Ovary (tissue), 10 donors: ENCODE measurements at regions of chr3 and their contacts with region 1.

Region 1: GRCh38 chr3:98022978-98023820 is 11.9 kb downstream of the GABRR3 start:
- DNase-seq: peak; percentile 79 to 92 (median 91)
- H3K4me3 ChIP-seq: no peak overlapping the region
- H3K27ac ChIP-seq: no peak overlapping the region
- H3K4me1 ChIP-seq: no peaks in the 10 kb centered on the region
- H3K27me3 ChIP-seq: no peaks in the 10 kb centered on the region
- CTCF ChIP-seq: peak; percentile 83 to 87 (median 86)
- EP300 ChIP-seq: no peak
- POLR2A ChIP-seq: no peak

Region 2: GRCh38 chr3:97793420-97794019 is 229.7 kb before region 1 on chr3:
- intact Hi-C with region 1: loop called (anchors 2 to 5 kb)
- DNase-seq: no peak
- H3K4me3 ChIP-seq: no peak overlapping the region
- H3K27ac ChIP-seq: no peak overlapping the region
- H3K4me1 ChIP-seq: no peaks in the 10 kb centered on the region
- H3K27me3 ChIP-seq: no peaks in the 10 kb centered on the region
- CTCF ChIP-seq: peak; percentile 51 to 76 (median 74)
- EP300 ChIP-seq: no peak
- POLR2A ChIP-seq: no peak

Region 3: DNA sequence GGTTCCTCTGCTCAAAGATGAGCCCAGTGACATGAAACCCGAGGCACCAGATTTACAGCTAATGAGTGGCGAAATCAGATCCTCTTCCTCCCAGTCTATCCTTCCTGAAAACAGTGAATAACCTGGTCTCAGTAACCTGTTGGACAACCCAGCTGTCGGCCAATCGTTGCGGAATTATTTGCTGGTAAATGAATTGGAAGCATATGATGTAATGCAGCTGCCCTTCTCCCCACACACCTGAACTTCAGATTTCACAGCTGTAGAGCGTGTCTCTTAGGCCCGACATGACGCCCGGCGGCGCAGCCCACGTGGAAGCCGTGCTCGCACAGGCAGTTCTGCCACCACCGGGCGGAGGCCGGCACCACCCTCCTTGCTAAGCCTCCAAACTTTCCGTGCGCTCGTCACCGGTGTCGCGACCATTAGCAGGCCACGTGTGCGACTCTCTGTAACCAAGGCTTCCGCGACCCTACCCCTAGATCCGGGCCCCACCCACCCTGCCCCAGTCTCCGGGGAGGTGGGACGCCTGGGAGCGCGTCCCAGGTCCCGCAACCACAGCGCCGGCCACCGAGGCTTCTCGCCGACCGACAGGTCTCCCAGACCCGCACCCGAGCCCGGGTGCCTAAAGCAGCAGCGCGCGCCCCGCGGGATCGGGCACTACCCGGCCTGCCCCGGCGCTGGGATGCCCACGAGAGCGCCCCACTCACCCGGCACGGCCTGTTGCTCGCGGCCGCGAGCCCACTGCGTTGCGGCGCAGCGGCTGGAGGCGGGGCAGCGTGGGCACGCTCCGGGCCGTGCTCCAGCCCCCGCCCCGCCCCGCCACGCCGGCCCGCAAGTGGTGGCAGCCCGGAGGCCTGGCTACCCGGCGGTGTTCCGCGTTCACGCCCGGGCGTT is 51.3 kb before region 1 on chr3 and contains the start of gene RIOX2:
- intact Hi-C with region 1: no loop called
- DNase-seq: peak; percentile 58 to 80 (median 72)
- H3K4me3 ChIP-seq: peak within 1 kb of the TSS; percentile 93
- H3K27ac ChIP-seq: peak within 1 kb of the TSS; percentile 76 to 90
- H3K4me1 ChIP-seq: no peaks in the 10 kb centered on the region
- H3K27me3 ChIP-seq: no peaks in the 10 kb centered on the region
- CTCF ChIP-seq: no peak
- EP300 ChIP-seq: no peak
- POLR2A ChIP-seq: peak; percentile 30
- total RNA-seq, gene RIOX2: 12.6 to 36.7 (median 23.0) TPM